Heart right ventricle (tissue), 16 donors: ENCODE measurements at regions of chr4 and their contacts with region 1.

Region 1: DNA sequence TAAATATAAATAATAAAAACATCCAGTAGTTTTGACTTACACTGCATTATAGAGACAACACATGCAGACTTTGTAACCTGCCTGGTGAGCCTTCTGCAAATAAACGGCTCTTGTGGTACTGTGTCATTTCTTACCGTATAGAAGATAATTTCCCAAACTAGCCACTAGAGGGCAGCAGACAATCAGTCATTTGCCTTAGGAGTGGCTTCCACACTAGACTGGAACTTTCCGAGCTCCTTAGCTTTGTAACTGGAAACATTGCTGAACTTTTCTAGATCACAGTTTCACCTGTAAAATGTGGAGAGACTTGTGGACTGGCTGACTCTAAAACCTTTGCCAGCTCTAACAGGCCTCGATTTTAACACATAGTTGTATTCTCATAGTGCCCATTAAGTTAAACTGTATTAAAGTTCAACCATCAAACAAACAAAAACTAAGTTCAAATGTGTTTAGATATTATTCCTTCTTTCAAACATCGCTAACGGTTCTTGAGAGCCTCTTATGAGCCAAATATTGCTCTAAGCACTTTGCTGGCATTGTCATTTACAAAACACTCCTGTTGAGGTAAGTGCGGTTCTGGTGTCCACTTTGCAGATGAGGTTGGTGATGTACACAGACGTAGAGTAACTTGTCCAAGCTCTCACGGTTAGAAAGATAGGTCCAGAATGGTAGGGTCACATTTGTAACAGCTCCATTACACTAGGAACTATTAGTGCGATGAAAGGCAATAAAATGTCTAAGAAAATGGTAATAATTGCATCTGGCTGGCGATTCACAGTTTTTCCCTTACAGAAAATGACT is 345.5 kb downstream of the ANK2 start:
- DNase-seq: peak in 1 of 2 donors; percentile 80
- ATAC-seq: peak; percentile 92 to 97 (median 95)
- H3K4me3 ChIP-seq: no peak overlapping the region
- H3K27ac ChIP-seq: peak overlapping the region in 1 of 10 donors; percentile 23
- H3K4me1 ChIP-seq: peaks cover 0 to 17% (median 3%) of the 10 kb centered on the region in 9 donors
- H3K27me3 ChIP-seq: no peaks in the 10 kb centered on the region
- CTCF ChIP-seq: peak; percentile 80 to 91 (median 88)

Region 2: DNA sequence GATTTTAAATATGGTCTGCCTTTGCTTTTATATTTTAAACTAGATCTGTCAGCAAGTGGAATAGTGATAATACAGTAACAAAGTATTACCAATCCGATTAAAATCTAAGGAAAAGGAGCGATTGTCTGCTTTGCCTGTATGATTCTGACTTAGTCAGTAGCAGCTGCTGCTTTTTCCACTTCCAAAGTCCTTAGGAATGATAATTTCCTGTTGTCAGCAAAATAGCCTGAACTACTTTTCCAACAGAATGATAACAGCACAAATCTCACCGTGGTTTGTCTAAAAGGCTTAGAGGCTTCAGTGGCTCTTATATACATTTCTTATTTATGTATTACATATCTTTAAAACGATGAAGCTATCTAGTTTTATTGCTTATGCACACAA is 55.5 kb before region 1 on chr4:
- intact Hi-C with region 1: no loop called
- DNase-seq: no peak
- ATAC-seq: peak in 3 of 8 donors; percentile 33 to 56 (median 46)
- H3K4me3 ChIP-seq: no peak overlapping the region
- H3K27ac ChIP-seq: peak overlapping the region in 3 of 10 donors; percentile 5 to 59 (median 50)
- H3K4me1 ChIP-seq: peaks cover 0 to 8% (median 0%) of the 10 kb centered on the region in 9 donors
- H3K27me3 ChIP-seq: no peaks in the 10 kb centered on the region
- CTCF ChIP-seq: no peak

Region 3: GRCh38 chr4:113445286-113445685 is 50.4 kb after region 1 on chr4:
- intact Hi-C with region 1: loop called in 2 of 10 experiments (anchors 10 kb)
- DNase-seq: peak; percentile 24 to 57
- ATAC-seq: peak; percentile 69 to 93 (median 79)
- H3K4me3 ChIP-seq: no peak overlapping the region
- H3K27ac ChIP-seq: peak overlapping the region; percentile 30 to 73 (median 67)
- H3K4me1 ChIP-seq: peaks cover 4 to 65% (median 42%) of the 10 kb centered on the region in 9 donors
- H3K27me3 ChIP-seq: no peaks in the 10 kb centered on the region
- CTCF ChIP-seq: no peak

Region 4: DNA sequence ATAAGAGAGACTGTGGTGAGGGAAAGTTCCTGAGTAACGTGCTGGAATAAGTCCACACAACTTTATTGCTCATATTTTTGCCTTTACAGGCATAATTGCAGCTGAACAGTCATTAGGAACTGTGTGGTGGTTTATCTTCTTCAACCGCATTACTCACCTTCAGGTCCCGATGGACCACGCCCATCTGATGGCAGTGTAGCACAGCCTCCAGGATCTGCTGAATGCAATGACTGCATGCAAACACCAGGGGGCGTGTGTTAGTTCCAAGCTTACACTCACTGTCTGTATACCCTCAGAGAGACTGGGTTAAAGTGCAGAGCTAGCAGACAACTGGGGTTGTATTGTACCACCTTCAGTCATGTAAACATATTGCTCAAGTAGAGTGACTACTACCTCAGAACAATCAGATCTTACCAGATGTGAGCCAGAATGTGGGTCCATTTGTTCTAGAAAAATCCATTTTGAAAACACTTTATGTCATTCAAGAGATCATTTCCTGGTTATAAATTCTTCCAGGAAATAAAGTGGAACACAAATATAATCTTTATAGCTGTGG is 152.6 kb after region 1 on chr4:
- intact Hi-C with region 1: loop called in 4 of 10 experiments (anchors 5 to 10 kb)
- DNase-seq: peak; percentile 74 to 88
- ATAC-seq: peak; percentile 93 to 99 (median 98)
- H3K4me3 ChIP-seq: no peak overlapping the region
- H3K27ac ChIP-seq: peak overlapping the region in 9 of 10 donors; percentile 20 to 74 (median 47)
- H3K4me1 ChIP-seq: peaks cover 0 to 22% (median 13%) of the 10 kb centered on the region in 9 donors
- H3K27me3 ChIP-seq: no peaks in the 10 kb centered on the region
- CTCF ChIP-seq: peak; percentile 87 to 99 (median 98)

Region 5: GRCh38 chr4:113781439-113782040 is 386.6 kb after region 1 on chr4:
- intact Hi-C with region 1: loop called in 2 of 10 experiments (anchors 5 kb)
- DNase-seq: no peak
- ATAC-seq: peak in 1 of 8 donors; percentile 41
- H3K4me3 ChIP-seq: no peak overlapping the region
- H3K27ac ChIP-seq: no peak overlapping the region
- H3K4me1 ChIP-seq: peaks cover 0 to 32% (median 0%) of the 10 kb centered on the region in 9 donors
- H3K27me3 ChIP-seq: no peaks in the 10 kb centered on the region
- CTCF ChIP-seq: peak; percentile 33 to 81 (median 73)

Region 6: GRCh38 chr4:113908829-113909228 is 513.9 kb after region 1 on chr4:
- intact Hi-C with region 1: loop called in 2 of 10 experiments (anchors 2 to 10 kb)
- DNase-seq: no peak
- ATAC-seq: no peak
- H3K4me3 ChIP-seq: no peak overlapping the region
- H3K27ac ChIP-seq: no peak overlapping the region
- H3K4me1 ChIP-seq: peaks cover 0 to 4% (median 0%) of the 10 kb centered on the region in 9 donors
- H3K27me3 ChIP-seq: no peaks in the 10 kb centered on the region
- CTCF ChIP-seq: peak in 3 of 9 donors; percentile 25 to 34 (median 30)

Region 7: DNA sequence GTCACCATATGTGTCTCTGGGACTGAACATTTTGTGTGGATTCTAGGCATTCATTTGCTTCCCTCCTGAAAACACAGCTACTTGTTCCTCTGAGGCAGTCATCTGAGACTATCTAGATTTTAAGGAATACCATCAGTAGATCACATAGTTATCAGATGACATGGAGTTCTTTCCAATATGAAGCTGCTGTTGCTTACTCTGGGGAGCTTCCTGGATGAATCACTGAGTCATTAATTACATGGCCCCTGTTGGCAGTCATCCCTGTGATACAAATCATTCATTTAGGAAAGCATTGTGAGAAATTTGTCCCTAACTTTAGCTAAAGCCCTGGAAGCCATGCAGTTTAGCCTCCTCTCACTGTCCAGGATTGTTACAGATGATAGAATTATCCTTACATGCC is 682.7 kb after region 1 on chr4:
- intact Hi-C with region 1: loop called in 4 of 10 experiments (anchors 5 to 10 kb)
- DNase-seq: no peak
- ATAC-seq: no peak
- H3K4me3 ChIP-seq: no peak overlapping the region
- H3K27ac ChIP-seq: no peak overlapping the region
- H3K4me1 ChIP-seq: peaks cover 0 to 4% (median 0%) of the 10 kb centered on the region in 9 donors
- H3K27me3 ChIP-seq: no peaks in the 10 kb centered on the region
- CTCF ChIP-seq: no peak

Region 8: DNA sequence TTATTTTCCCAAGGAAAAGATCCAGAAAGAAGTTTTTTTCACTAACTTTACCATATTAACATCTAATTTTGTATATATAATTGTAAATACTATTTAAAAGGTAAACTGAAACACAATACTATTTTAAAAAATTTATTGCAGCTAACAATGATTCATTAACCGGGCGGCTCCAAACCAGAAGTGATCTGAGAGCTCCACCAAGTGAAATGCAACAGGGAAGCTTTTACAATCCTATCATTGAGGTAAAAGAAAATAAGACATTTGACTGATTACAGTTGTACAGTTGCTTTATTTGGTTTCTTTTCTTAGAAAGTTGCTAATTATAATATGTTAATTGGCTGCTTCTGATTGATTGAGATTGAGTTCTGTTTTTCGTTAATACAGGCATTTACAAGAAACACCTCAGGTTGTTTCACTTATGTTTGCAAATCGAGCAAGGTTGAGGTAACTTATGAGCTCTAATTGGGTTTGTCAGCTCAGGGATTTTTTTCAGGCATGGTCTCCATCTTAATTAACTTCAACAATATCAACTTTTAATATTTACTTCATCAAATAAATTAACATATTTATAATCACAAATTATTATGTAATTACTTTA is 983.5 kb after region 1 on chr4:
- intact Hi-C with region 1: loop called in 7 of 10 experiments (anchors 2 to 10 kb)
- DNase-seq: no peak
- ATAC-seq: no peak
- H3K4me3 ChIP-seq: no peak overlapping the region
- H3K27ac ChIP-seq: no peak overlapping the region
- H3K4me1 ChIP-seq: no peaks in the 10 kb centered on the region
- H3K27me3 ChIP-seq: no peaks in the 10 kb centered on the region
- CTCF ChIP-seq: peak in 7 of 9 donors; percentile 8 to 69 (median 55)